ENCODE measurements at regions of chr19 and their contacts with region 1.

Region 1: DNA sequence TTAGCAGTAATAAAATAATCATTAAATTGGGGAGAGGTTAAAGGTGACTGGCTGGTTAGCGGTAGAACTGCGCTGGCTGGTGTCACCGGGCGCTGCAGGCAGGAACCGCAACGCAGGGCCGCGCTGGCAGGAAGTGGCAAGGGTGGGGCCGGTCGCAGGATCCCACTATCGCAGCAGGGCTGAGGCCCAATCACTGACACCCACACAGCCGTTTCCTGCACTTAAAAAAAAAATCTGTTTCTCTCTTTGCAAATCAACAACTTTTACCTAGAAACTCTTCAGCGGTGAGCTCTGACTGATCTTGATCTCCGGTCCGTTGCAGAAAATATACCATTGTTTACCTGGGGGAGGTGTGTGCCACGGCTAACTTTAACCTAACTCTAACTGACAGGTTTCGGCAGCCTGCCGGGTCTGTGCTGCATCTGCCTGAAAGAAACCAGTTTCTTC is 46.9 kb downstream of the KLF2 start:
- DNase-seq: peak; percentile 67 to 73 (median 69)
- H3K4me3 ChIP-seq: peak overlapping the region in 2 of 3 experiments; percentile 10 to 68
- H3K4me3 Mint-ChIP-seq: peak overlapping the region; percentile 65 to 89
- H3K27ac ChIP-seq: peak overlapping the region; percentile 77 to 88
- H3K27ac Mint-ChIP-seq: peak overlapping the region; percentile 92 to 96 (median 94)
- H3K4me1 ChIP-seq: peaks cover 77 to 87% of the 10 kb centered on the region in 2 donors
- H3K4me1 Mint-ChIP-seq: peaks cover 27% of the 10 kb centered on the region
- H3K27me3 ChIP-seq: no peaks in the 10 kb centered on the region
- H3K27me3 Mint-ChIP-seq: no peaks in the 10 kb centered on the region
- CTCF ChIP-seq: no peak

Region 2: GRCh38 chr19:16197622-16198369 is 173.8 kb before region 1 on chr19 and contains the start of gene AP1M1:
- intact Hi-C with region 1: no loop called
- DNase-seq: peak; percentile 98 to 100 (median 98)
- H3K4me3 ChIP-seq: peak within 1 kb of the TSS; percentile 96 to 98 (median 96)
- H3K4me3 Mint-ChIP-seq: peak within 1 kb of the TSS; percentile 82 to 89
- H3K27ac ChIP-seq: peak within 1 kb of the TSS; percentile 59 to 89
- H3K27ac Mint-ChIP-seq: peak within 1 kb of the TSS; percentile 88 to 96 (median 95)
- H3K4me1 ChIP-seq: peaks cover 30 to 40% of the 10 kb centered on the region in 2 donors
- H3K4me1 Mint-ChIP-seq: peaks cover 34% of the 10 kb centered on the region
- H3K27me3 ChIP-seq: no peaks in the 10 kb centered on the region
- H3K27me3 Mint-ChIP-seq: no peaks in the 10 kb centered on the region
- CTCF ChIP-seq: no peak
- polyA plus RNA-seq, gene AP1M1: 103 to 134 (median 133) TPM

Region 3: DNA sequence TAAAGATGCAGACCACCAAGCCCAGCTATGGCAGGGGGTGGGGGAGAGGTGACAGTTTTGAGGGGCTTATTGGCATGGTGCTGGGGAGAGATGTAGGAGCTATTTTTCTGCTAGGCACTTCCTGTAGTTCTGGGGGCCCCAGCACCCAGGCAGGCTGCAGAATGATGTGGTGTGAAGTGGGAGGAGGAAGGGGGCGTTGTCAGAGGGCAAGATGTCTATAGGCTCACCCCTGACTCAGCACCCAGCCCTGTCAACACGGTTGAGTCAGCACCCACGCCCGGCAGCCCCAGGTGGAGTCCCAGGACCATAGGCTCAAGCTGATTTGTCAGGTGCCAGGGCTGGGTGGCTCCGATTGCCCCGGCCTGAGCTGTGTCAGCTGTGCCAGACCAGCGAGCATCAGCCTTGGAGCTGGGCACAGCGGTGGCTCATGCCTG is 41.2 kb before region 1 on chr19:
- intact Hi-C with region 1: loop called (anchors 2 to 5 kb)
- DNase-seq: peak; percentile 82 to 96 (median 85)
- H3K4me3 ChIP-seq: peak overlapping the region in 1 of 3 experiments; percentile 98
- H3K4me3 Mint-ChIP-seq: peak overlapping the region; percentile 34 to 65
- H3K27ac ChIP-seq: peak overlapping the region; percentile 1 to 94
- H3K27ac Mint-ChIP-seq: peak overlapping the region; percentile 95 to 99 (median 98)
- H3K4me1 ChIP-seq: peaks cover 41 to 60% of the 10 kb centered on the region in 2 donors
- H3K4me1 Mint-ChIP-seq: peaks cover 50% of the 10 kb centered on the region
- H3K27me3 ChIP-seq: no peaks in the 10 kb centered on the region
- H3K27me3 Mint-ChIP-seq: peaks cover 0 to 2% (median 0%) of the 10 kb centered on the region in 3 donors
- CTCF ChIP-seq: no peak

Region 4: GRCh38 chr19:16342002-16342715 is 29.4 kb before region 1 on chr19:
- intact Hi-C with region 1: loop called in 1 of 2 experiments (anchors 2 kb)
- DNase-seq: peak in 2 of 3 donors; percentile 67 to 69
- H3K4me3 ChIP-seq: peak overlapping the region in 1 of 3 experiments; percentile 30
- H3K4me3 Mint-ChIP-seq: peak overlapping the region; percentile 56 to 65
- H3K27ac ChIP-seq: peak overlapping the region; percentile 21 to 64
- H3K27ac Mint-ChIP-seq: peak overlapping the region; percentile 76 to 97 (median 89)
- H3K4me1 ChIP-seq: peaks cover 51 to 66% of the 10 kb centered on the region in 2 donors
- H3K4me1 Mint-ChIP-seq: peaks cover 55% of the 10 kb centered on the region
- H3K27me3 ChIP-seq: no peaks in the 10 kb centered on the region
- H3K27me3 Mint-ChIP-seq: peaks cover 2 to 7% (median 2%) of the 10 kb centered on the region in 3 donors
- CTCF ChIP-seq: no peak